A673 (cell line): ENCODE measurements at regions of chr6 and their contacts with region 1.

Region 1: GRCh38 chr6:93282521-93283031 is 136.8 kb downstream of the EPHA7 start:
- DNase-seq: no peak
- H3K4me3 ChIP-seq: no peak overlapping the region
- H3K27ac ChIP-seq: no peak overlapping the region
- H3K4me1 ChIP-seq: no peaks in the 10 kb centered on the region
- H3K27me3 ChIP-seq: no peaks in the 10 kb centered on the region
- CTCF ChIP-seq: no peak

Region 2: GRCh38 chr6:93176070-93176469 is 106.5 kb before region 1 on chr6:
- CTCF ChIA-PET with region 1: no interaction called
- POLR2A ChIA-PET with region 1: no interaction called
- intact Hi-C with region 1: no loop called
- DNase-seq: no peak
- H3K4me3 ChIP-seq: no peak overlapping the region
- H3K27ac ChIP-seq: no peak overlapping the region
- H3K4me1 ChIP-seq: peaks cover 5% of the 10 kb centered on the region
- H3K27me3 ChIP-seq: no peaks in the 10 kb centered on the region
- CTCF ChIP-seq: no peak

Region 3: DNA sequence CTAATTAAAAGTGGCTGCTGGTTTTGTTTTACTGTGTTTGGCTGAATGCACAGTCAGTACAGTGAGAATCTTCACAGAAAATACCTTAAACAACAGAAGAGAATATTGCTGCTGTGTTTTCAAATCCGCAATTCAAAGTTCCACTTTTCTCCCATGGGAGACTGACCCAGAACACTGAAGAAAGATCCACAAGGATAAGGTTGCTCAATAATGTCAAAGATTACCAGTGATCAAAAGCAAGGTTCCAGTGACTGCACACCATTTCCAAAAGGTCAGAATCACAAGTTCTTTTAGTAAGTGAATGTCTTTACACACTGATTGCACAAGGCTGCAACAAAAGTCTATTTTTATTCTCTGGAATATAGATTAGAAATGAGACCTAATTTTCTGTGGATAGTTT is 54.4 kb after region 1 on chr6:
- CTCF ChIA-PET with region 1: no interaction called
- POLR2A ChIA-PET with region 1: no interaction called
- intact Hi-C with region 1: no loop called
- DNase-seq: no peak
- H3K4me3 ChIP-seq: no peak overlapping the region
- H3K27ac ChIP-seq: no peak overlapping the region
- H3K4me1 ChIP-seq: no peaks in the 10 kb centered on the region
- H3K27me3 ChIP-seq: no peaks in the 10 kb centered on the region
- CTCF ChIP-seq: no peak

Region 4: GRCh38 chr6:94424692-94425091 is 1142.1 kb after region 1 on chr6:
- CTCF ChIA-PET with region 1: no interaction called
- POLR2A ChIA-PET with region 1: interaction called, 11 read pairs
- intact Hi-C with region 1: no loop called
- DNase-seq: peak; percentile 80
- H3K4me3 ChIP-seq: no peak overlapping the region
- H3K27ac ChIP-seq: peak overlapping the region; percentile 77
- H3K4me1 ChIP-seq: peaks cover 9% of the 10 kb centered on the region
- H3K27me3 ChIP-seq: no peaks in the 10 kb centered on the region
- CTCF ChIP-seq: no peak